Vagina (tissue), 2 donors: ENCODE measurements at regions of chr1 and their contacts with region 1.

Region 1: GRCh38 chr1:18597160-18598042 is 33.2 kb upstream of the PAX7 start:
- DNase-seq: no peak
- H3K4me3 ChIP-seq: no peak overlapping the region
- H3K27ac ChIP-seq: no peak overlapping the region
- H3K4me1 ChIP-seq: peaks cover 8% of the 10 kb centered on the region
- H3K27me3 ChIP-seq: no peaks in the 10 kb centered on the region
- CTCF ChIP-seq: peak; percentile 70 to 82 (median 78)
- POLR2A ChIP-seq: no peak

Region 2: GRCh38 chr1:18875107-18875795 is 277.9 kb after region 1 on chr1:
- intact Hi-C with region 1: loop called (anchors 10 kb)
- DNase-seq: no peak
- H3K4me3 ChIP-seq: no peak overlapping the region
- H3K27ac ChIP-seq: no peak overlapping the region
- H3K4me1 ChIP-seq: no peaks in the 10 kb centered on the region
- H3K27me3 ChIP-seq: no peaks in the 10 kb centered on the region
- CTCF ChIP-seq: peak; percentile 51 to 69 (median 58)
- POLR2A ChIP-seq: no peak